ENCODE measurements at regions of chr19 and their contacts with region 1.

Region 1: GRCh38 chr19:47273313-47273977 is 1.2 kb upstream of the INAFM1 start:
- DNase-seq: peak; percentile 77 to 93 (median 89)
- ATAC-seq: peak; percentile 56
- H3K4me3 ChIP-seq: peak overlapping the region; percentile 94 to 99
- H3K4me3 Mint-ChIP-seq: peak overlapping the region; percentile 98
- H3K27ac ChIP-seq: peak overlapping the region; percentile 96 to 97
- H3K27ac Mint-ChIP-seq: peak overlapping the region; percentile 97
- H3K4me1 ChIP-seq: peaks cover 18% of the 10 kb centered on the region
- H3K4me1 Mint-ChIP-seq: peaks cover 19% of the 10 kb centered on the region
- H3K27me3 ChIP-seq: no peaks in the 10 kb centered on the region
- H3K27me3 Mint-ChIP-seq: no peaks in the 10 kb centered on the region
- CTCF ChIP-seq: no peak

Region 2: DNA sequence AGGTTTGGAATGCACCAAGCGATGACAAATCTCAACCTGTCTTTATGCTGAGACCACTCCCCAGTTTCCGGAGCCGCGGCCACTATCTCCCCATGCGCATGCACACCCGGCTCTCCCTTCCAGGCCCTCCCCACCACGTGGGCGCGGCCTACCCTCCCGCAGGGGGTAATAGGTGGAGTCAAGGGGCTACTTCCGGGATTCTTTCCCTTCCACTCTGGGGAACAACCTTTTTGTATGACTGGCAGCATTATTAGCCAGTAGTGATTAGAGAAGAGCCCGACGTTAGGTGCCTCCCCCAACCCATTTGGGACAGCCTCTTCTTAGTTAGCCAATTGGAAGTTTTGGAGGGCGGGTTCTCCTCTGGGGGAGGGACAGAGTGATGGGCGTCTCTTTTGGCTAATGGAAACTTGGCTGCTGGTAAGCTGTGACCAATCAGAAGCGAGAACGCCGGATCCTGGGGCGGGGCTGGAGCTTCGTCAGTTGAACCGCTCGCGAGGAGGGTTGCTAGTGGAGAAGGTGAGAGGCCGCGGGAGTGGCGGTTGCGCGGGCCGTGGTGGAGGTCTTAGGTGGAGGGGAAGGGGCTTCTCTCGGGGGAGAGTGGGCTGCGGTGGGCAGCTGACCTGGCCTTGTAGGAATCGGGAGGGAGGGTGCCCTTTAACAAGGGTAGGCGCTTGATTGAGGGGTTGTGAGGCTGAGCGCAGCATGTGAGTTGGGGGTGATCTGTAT is 1278.3 kb before region 1 on chr19 and contains the start of gene CCDC61:
- CTCF ChIA-PET with region 1: no interaction called
- POLR2A ChIA-PET with region 1: no interaction called
- intact Hi-C with region 1: loop called in 1 of 2 experiments (anchors 5 kb)
- DNase-seq: peak; percentile 92 to 99 (median 95)
- ATAC-seq: peak; percentile 95
- H3K4me3 ChIP-seq: peak within 1 kb of the TSS; percentile 73 to 77
- H3K4me3 Mint-ChIP-seq: no peak within 1 kb of the TSS
- H3K27ac ChIP-seq: peak within 1 kb of the TSS; percentile 64 to 74
- H3K27ac Mint-ChIP-seq: no peak within 1 kb of the TSS
- H3K4me1 ChIP-seq: peaks cover 16% of the 10 kb centered on the region
- H3K4me1 Mint-ChIP-seq: peaks cover 25% of the 10 kb centered on the region
- H3K27me3 ChIP-seq: no peaks in the 10 kb centered on the region
- H3K27me3 Mint-ChIP-seq: peaks cover 7% of the 10 kb centered on the region
- CTCF ChIP-seq: no peak
- total RNA-seq, gene CCDC61: 4.9 to 6.2 TPM

Region 3: GRCh38 chr19:47047763-47048405 is 225.6 kb before region 1 on chr19:
- CTCF ChIA-PET with region 1: no interaction called
- POLR2A ChIA-PET with region 1: no interaction called
- intact Hi-C with region 1: loop called in 1 of 2 experiments (anchors 1 kb)
- DNase-seq: peak; percentile 22 to 85 (median 65)
- ATAC-seq: peak; percentile 37
- H3K4me3 ChIP-seq: peak overlapping the region; percentile 67 to 96
- H3K4me3 Mint-ChIP-seq: peak overlapping the region; percentile 98
- H3K27ac ChIP-seq: peak overlapping the region; percentile 31 to 62
- H3K27ac Mint-ChIP-seq: peak overlapping the region; percentile 91
- H3K4me1 ChIP-seq: peaks cover 8% of the 10 kb centered on the region
- H3K4me1 Mint-ChIP-seq: peaks cover 20% of the 10 kb centered on the region
- H3K27me3 ChIP-seq: no peaks in the 10 kb centered on the region
- H3K27me3 Mint-ChIP-seq: no peaks in the 10 kb centered on the region
- CTCF ChIP-seq: no peak

Region 4: DNA sequence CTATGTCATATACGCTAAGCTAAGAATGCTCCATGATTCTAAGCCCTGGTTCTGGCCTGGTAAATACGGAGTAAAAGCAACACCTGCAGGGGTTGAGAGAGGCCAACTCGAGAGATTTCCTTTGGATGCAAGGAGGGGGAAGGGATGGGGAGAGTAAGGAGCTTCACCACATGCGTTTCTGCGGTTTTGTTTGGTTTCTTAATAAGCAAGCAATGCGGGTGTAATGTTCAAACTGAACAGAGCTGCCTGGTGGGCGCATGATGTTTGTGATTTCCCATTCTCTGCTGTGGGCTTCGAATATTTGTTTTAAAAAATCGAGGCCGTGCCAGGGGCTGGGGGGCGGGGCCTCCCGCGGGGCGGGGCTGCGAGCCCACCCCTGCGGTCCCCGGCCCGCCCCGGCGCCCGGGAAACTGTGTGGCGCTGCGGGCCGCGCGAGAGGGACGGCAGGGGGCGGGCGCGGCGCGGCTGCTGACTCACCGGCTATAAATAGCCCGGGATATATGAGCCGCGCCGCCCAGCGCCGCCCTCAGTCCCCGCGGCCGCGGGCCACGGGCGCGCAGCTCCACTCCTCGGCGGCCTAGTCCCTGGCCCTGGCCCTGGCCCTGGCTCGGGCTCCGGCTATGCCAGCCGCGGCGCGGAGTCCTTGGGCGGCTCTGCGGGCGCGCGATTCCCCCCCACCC is 47.6 kb before region 1 on chr19:
- CTCF ChIA-PET with region 1: no interaction called
- POLR2A ChIA-PET with region 1: interaction called, 5 read pairs
- intact Hi-C with region 1: loop called (anchors 1 kb)
- DNase-seq: peak; percentile 80 to 95 (median 86)
- ATAC-seq: peak; percentile 47
- H3K4me3 ChIP-seq: peak overlapping the region; percentile 48 to 68
- H3K4me3 Mint-ChIP-seq: peak overlapping the region; percentile 81
- H3K27ac ChIP-seq: peak overlapping the region; percentile 73 to 89
- H3K27ac Mint-ChIP-seq: peak overlapping the region; percentile 92
- H3K4me1 ChIP-seq: peaks cover 40% of the 10 kb centered on the region
- H3K4me1 Mint-ChIP-seq: peaks cover 16% of the 10 kb centered on the region
- H3K27me3 ChIP-seq: no peaks in the 10 kb centered on the region
- H3K27me3 Mint-ChIP-seq: no peaks in the 10 kb centered on the region
- CTCF ChIP-seq: peak; percentile 51

Region 5: GRCh38 chr19:47284324-47284899 is 11.0 kb after region 1 on chr19:
- CTCF ChIA-PET with region 1: interaction called, 19 read pairs
- POLR2A ChIA-PET with region 1: no interaction called
- intact Hi-C with region 1: no loop called
- DNase-seq: peak in 6 of 9 experiments; percentile 39 to 78 (median 60)
- ATAC-seq: peak; percentile 69
- H3K4me3 ChIP-seq: no peak overlapping the region
- H3K4me3 Mint-ChIP-seq: no peak overlapping the region
- H3K27ac ChIP-seq: no peak overlapping the region
- H3K27ac Mint-ChIP-seq: no peak overlapping the region
- H3K4me1 ChIP-seq: no peaks in the 10 kb centered on the region
- H3K4me1 Mint-ChIP-seq: peaks cover 6% of the 10 kb centered on the region
- H3K27me3 ChIP-seq: no peaks in the 10 kb centered on the region
- H3K27me3 Mint-ChIP-seq: no peaks in the 10 kb centered on the region
- CTCF ChIP-seq: peak; percentile 82

Region 6: DNA sequence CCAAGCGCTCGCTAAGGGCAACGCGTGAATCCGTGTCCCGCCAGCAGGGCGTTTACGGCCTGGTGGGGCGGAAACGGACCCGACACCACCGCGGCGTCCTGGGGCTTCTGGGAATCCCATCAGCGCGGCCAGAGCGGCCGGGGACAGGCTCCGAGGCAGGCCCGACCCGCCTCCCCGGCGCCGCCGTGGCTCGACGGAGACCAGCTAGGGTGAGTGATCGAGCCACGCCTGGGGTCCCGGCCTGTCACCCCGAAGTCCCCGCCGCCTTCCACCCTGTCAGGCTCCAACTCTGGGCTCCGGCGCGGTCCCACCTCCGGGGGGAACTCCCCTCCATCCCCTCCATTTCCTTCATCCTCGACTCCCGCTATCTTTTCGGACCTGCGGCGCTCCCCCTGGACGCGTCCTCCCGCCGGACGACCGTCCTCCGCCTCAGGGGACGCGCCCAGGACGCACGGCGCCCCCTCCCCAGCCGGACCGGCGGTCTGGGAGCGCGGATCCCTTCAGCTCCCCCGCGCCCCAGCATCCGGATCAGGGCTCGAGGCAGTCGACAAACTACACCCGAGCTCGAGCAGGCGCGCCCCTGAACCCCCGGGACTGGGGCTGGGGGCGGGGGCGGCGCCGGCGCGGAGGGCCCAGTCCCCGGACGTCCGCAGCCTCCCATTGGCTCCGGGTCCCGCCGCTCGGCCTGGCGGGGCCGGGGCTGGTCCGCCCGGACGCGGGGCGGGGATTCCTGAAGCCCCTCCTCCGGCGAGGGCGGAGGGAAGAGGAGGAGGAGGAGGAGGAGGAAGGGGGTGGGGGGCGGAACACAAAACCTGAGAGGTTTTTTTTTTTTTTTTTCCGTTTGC is 334.9 kb after region 1 on chr19:
- CTCF ChIA-PET with region 1: no interaction called
- POLR2A ChIA-PET with region 1: no interaction called
- intact Hi-C with region 1: loop called in 1 of 2 experiments (anchors 2 kb)
- DNase-seq: peak; percentile 93 to 98 (median 95)
- ATAC-seq: peak; percentile 87
- H3K4me3 ChIP-seq: peak overlapping the region; percentile 84 to 99
- H3K4me3 Mint-ChIP-seq: peak overlapping the region; percentile 84
- H3K27ac ChIP-seq: peak overlapping the region; percentile 82 to 85
- H3K27ac Mint-ChIP-seq: peak overlapping the region; percentile 77
- H3K4me1 ChIP-seq: peaks cover 17% of the 10 kb centered on the region
- H3K4me1 Mint-ChIP-seq: peaks cover 29% of the 10 kb centered on the region
- H3K27me3 ChIP-seq: no peaks in the 10 kb centered on the region
- H3K27me3 Mint-ChIP-seq: no peaks in the 10 kb centered on the region
- CTCF ChIP-seq: no peak